ENCODE measurements at regions of chr10 and their contacts with region 1.

Region 1: GRCh38 chr10:119337796-119338432 is 130.5 kb downstream of the GRK5 start:
- DNase-seq: no peak
- ATAC-seq: no peak
- H3K4me3 ChIP-seq: no peak overlapping the region
- H3K27ac ChIP-seq: no peak overlapping the region
- H3K4me1 ChIP-seq: peaks cover 3% of the 10 kb centered on the region; the same call in 1 of the 2 replicates
- H3K27me3 ChIP-seq: no peaks in the 10 kb centered on the region
- CTCF ChIP-seq: no peak

Region 2: GRCh38 chr10:119207367-119207668 is 130.6 kb before region 1 on chr10 and contains the start of gene GRK5:
- CTCF ChIA-PET with region 1: no interaction called
- POLR2A ChIA-PET with region 1: no interaction called
- in situ Hi-C with region 1: no loop called
- intact Hi-C with region 1: no loop called
- DNase-seq: peak; percentile 74
- ATAC-seq: peak; percentile 91
- H3K4me3 ChIP-seq: peak within 1 kb of the TSS; percentile 80 to 94
- H3K27ac ChIP-seq: peak within 1 kb of the TSS; percentile 90
- H3K4me1 ChIP-seq: peaks cover 42% of the 10 kb centered on the region
- H3K27me3 ChIP-seq: no peaks in the 10 kb centered on the region
- CTCF ChIP-seq: no peak
- total RNA-seq, gene GRK5: 29.0 TPM

Region 3: GRCh38 chr10:119350502-119351097 is 12.7 kb after region 1 on chr10:
- CTCF ChIA-PET with region 1: interaction called, 11 read pairs
- POLR2A ChIA-PET with region 1: no interaction called
- in situ Hi-C with region 1: no loop called
- intact Hi-C with region 1: no loop called
- DNase-seq: no peak
- ATAC-seq: no peak
- H3K4me3 ChIP-seq: no peak overlapping the region
- H3K27ac ChIP-seq: no peak overlapping the region
- H3K4me1 ChIP-seq: no peaks in the 10 kb centered on the region
- H3K27me3 ChIP-seq: no peaks in the 10 kb centered on the region
- CTCF ChIP-seq: no peak

Region 4: GRCh38 chr10:119368991-119369869 is 31.3 kb after region 1 on chr10:
- CTCF ChIA-PET with region 1: no interaction called
- POLR2A ChIA-PET with region 1: no interaction called
- in situ Hi-C with region 1: no loop called
- intact Hi-C with region 1: no loop called
- DNase-seq: no peak
- ATAC-seq: no peak
- H3K4me3 ChIP-seq: no peak overlapping the region
- H3K27ac ChIP-seq: no peak overlapping the region
- H3K4me1 ChIP-seq: peaks cover 5% of the 10 kb centered on the region; the same call in 1 of the 2 replicates
- H3K27me3 ChIP-seq: no peaks in the 10 kb centered on the region
- CTCF ChIP-seq: no peak

Region 5: GRCh38 chr10:119408072-119408471 is 70.2 kb after region 1 on chr10:
- CTCF ChIA-PET with region 1: no interaction called
- POLR2A ChIA-PET with region 1: interaction called, 16 read pairs
- in situ Hi-C with region 1: no loop called
- intact Hi-C with region 1: no loop called
- DNase-seq: no peak
- ATAC-seq: no peak
- H3K4me3 ChIP-seq: no peak overlapping the region
- H3K27ac ChIP-seq: no peak overlapping the region
- H3K4me1 ChIP-seq: no peaks in the 10 kb centered on the region
- H3K27me3 ChIP-seq: no peaks in the 10 kb centered on the region
- CTCF ChIP-seq: no peak